HCT116 (cell line): ENCODE measurements at regions of chr12 and their contacts with region 1.

Region 1: DNA sequence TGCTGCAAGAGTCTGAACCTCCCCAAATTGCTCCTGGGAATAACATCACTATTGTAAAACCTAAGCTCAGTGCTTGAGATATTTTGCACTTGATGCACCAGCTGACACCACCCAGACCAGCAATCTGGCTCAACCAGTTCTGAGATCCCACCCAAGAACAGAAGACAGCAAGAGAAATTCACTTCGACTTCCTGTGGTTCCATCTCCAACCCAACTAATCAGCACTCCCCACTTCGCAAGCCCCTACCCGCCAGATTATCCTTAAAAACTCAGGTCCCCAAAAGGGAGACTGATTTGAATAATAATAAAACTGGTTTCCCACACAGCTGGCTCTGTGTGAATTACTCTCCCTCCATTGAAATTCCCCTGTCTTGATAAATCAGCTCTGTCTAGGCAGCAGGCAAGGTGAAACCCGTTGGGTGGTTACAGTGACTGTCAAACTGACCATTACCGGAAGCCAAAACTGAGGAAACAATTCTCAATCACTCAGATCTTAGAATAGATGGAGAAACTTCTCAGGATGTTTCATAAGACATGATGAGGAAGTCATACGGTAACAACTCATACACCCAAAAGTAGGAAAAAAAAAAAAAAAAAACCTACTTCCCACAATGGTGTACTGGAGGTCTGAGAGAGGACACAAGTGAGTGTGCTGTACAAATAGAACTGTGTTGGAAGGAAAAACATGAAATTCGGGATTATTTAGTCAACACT is 92.4 kb downstream of the TMTC1 start:
- DNase-seq: no peak
- ATAC-seq: no peak
- H3K4me3 ChIP-seq: no peak overlapping the region
- H3K27ac ChIP-seq: no peak overlapping the region
- H3K4me1 ChIP-seq: no peaks in the 10 kb centered on the region
- H3K27me3 ChIP-seq: no peaks in the 10 kb centered on the region
- CTCF ChIP-seq: no peak
- POLR2A ChIP-seq: no peak
- RAD21 ChIP-seq: no peak

Region 2: GRCh38 chr12:29882846-29883245 is 191.5 kb after region 1 on chr12:
- CTCF ChIA-PET with region 1: no interaction called
- POLR2A ChIA-PET with region 1: no interaction called
- RAD21 ChIA-PET with region 1: no interaction called
- intact Hi-C with region 1: no loop called
- DNase-seq: no peak
- ATAC-seq: no peak
- H3K4me3 ChIP-seq: no peak overlapping the region
- H3K27ac ChIP-seq: no peak overlapping the region
- H3K4me1 ChIP-seq: no peaks in the 10 kb centered on the region
- H3K27me3 ChIP-seq: no peaks in the 10 kb centered on the region
- CTCF ChIP-seq: no peak
- POLR2A ChIP-seq: no peak
- RAD21 ChIP-seq: no peak

Region 3: GRCh38 chr12:30515351-30515750 is 824.1 kb after region 1 on chr12:
- CTCF ChIA-PET with region 1: no interaction called
- POLR2A ChIA-PET with region 1: no interaction called
- RAD21 ChIA-PET with region 1: no interaction called
- intact Hi-C with region 1: loop called (anchors 10 kb)
- DNase-seq: peak; percentile 2
- ATAC-seq: no peak
- H3K4me3 ChIP-seq: no peak overlapping the region
- H3K27ac ChIP-seq: no peak overlapping the region
- H3K4me1 ChIP-seq: no peaks in the 10 kb centered on the region
- H3K27me3 ChIP-seq: no peaks in the 10 kb centered on the region
- CTCF ChIP-seq: peak in 2 of 3 experiments; percentile 24 to 41; a peak in 2 of 6 replicates
- POLR2A ChIP-seq: no peak
- RAD21 ChIP-seq: peak; percentile 47